ENCODE measurements at regions of chr1 and their contacts with region 1.

Region 1: DNA sequence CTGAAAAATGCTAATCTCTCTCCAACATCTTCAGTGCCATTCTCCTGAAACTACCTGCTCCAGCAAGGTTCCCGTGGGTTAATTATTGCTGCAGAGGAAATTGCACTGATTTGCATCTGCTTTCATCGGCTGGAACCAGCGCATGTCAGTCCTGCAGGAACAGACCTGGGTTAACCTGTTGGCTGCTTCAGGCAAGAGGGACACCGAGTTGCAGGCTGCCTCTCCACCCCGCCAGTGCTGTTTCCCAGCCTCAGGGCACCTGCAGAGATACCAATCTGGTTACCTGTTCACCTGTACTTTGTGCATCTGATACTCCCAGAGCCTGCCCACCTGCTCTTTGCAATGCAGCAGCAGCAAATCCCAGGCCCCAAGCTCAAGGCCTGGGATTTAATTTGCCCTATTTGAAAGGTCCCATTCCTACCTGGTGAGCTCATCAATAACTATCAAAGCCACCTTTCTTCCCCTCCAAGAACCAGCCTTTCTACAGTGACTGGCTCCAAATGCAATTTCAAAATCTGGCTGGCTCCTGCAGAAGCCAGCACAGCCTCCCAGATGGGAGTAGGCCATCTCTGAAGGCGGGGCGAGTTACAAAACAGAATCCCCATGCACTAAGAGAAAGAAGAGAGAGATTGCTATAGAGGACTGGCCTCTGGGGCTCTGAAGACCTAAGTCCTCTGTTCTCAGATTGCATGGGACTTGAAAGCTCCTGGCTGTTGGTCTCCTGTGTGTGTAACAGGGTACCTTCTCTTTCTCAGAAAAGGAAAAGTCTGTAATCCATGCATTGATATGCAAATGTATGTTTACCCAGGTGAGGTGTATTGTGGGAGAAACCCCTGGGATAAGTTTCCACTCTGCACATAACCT is 67.8 kb downstream of the TOMM20 start:
- DNase-seq: no peak
- H3K4me3 ChIP-seq: no peak overlapping the region
- H3K27ac ChIP-seq: no peak overlapping the region
- H3K4me1 ChIP-seq: peaks cover 40% of the 10 kb centered on the region
- CTCF ChIP-seq: no peak

Region 2: GRCh38 chr1:234089394-234089793 is 971.4 kb before region 1 on chr1:
- CTCF ChIA-PET with region 1: no interaction called
- POLR2A ChIA-PET with region 1: no interaction called
- intact Hi-C with region 1: no loop called
- DNase-seq: no peak
- H3K4me3 ChIP-seq: no peak overlapping the region
- H3K27ac ChIP-seq: no peak overlapping the region
- H3K4me1 ChIP-seq: no peaks in the 10 kb centered on the region
- CTCF ChIP-seq: peak; percentile 59

Region 3: DNA sequence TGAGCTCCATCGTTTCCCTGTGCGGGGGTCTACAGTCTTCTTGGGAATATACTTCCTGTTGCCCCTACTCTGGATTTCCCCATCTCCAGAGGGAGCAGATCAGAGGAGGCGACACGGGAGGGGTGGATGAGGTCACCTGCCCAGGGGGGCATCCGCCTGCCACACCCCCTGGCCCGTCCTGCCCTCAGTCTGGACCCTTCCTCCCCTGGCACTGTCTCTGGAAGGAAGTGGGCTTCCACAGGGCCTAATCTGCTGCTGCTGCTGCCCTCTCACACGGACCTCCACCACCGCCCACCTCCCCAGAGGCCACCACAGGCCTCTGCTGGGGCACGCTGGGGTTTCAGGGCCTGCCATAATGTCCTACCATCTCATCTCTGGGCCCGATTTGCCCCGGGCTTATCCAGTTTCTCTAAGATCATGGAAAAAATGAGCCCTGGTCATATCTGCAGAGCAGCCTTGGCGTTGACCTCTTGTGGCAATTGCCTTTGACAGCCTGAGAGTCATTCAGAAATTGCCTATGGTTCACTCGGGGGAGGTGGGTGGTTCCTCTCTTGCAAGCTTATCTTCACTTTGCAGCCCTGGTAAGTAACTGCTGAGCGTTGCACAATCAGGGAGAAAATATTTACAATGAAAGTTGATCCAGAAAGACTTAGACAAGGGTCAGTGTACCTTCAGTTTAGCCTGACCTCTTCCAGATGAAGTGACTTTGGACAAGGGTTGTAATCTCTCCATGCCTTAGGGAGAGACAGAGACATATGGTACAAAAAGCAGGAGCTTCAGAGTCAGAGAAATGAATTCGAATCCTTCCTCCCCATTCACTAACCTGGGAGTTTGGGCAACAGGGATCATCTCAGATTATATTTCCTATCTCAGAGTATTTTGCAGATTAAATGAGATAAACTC is 184.6 kb before region 1 on chr1:
- CTCF ChIA-PET with region 1: interaction called, 13 read pairs
- POLR2A ChIA-PET with region 1: no interaction called
- intact Hi-C with region 1: no loop called
- DNase-seq: no peak
- H3K4me3 ChIP-seq: no peak overlapping the region
- H3K27ac ChIP-seq: no peak overlapping the region
- H3K4me1 ChIP-seq: peaks cover 15% of the 10 kb centered on the region
- CTCF ChIP-seq: no peak

Region 4: DNA sequence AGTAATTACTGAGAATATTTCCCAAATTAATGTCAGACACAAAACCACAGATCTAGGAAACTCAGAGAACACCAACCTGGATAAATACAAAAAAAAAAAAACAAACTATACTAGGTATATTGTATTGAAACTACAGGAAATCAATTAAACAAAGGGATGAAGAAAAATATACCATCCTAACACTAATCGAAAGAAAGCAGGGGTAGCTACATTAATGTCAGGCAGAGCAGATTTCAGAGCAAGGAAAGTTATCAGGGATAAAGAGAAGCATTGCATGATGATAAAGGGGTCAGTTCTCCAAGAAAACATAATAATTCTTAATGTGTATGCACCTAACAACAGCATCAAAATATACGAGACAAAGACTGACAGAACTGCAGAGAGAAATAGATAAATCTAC is 22.1 kb before region 1 on chr1:
- CTCF ChIA-PET with region 1: interaction called, 16 read pairs
- POLR2A ChIA-PET with region 1: interaction called, 4 read pairs
- intact Hi-C with region 1: no loop called
- DNase-seq: no peak
- H3K4me3 ChIP-seq: no peak overlapping the region
- H3K27ac ChIP-seq: no peak overlapping the region
- H3K4me1 ChIP-seq: peaks cover 10% of the 10 kb centered on the region
- CTCF ChIP-seq: no peak